CD8-positive, alpha-beta T cell (primary cell): ENCODE measurements at regions of chr19 and their contacts with region 1.

Region 1: DNA sequence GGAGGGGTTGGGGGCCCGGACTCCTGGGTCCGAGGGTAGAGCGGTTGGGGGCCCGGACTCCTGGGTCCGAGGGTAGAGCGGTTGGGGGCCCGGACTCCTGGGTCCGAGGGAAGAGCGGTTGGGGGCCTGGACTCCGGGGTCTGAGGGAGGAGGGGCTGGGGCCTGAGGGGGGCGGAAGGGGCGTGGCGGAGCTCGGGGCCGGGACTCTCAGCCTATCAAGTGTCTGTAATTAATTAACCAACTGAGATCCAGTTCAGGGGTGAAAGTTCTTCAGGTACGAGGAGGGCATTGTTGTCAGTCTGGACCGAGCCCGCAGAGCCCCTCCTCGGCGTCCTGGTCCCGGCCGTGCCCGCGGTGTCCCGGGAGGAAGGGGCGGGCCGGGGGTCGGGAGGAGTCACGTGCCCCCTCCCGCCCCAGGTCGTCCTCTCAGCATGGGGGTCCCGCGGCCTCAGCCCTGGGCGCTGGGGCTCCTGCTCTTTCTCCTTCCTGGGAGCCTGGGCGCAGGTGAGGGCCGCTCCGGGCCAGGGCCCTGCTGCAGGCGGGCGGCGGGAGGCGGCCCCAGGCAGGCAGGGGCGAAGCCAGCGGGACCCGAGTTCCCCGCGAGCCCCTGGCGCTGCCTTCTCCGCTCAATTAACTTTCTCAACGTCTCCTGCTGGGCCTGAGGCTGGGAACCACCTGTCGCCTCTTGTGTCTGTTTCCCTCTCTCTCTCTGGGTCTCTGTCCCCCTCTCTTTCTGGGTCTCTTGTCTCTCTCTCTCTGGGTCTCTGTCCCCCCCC is 697 bp downstream of the FCGRT start:
- DNase-seq: peak in 2 of 9 experiments; percentile 48 to 56
- ATAC-seq: peak; percentile 72
- H3K4me3 ChIP-seq: peak overlapping the region; percentile 61 to 66
- H3K4me3 Mint-ChIP-seq: peak overlapping the region; percentile 84
- H3K27ac ChIP-seq: peak overlapping the region; percentile 32 to 33
- H3K27ac Mint-ChIP-seq: peak overlapping the region; percentile 71
- H3K4me1 ChIP-seq: peaks cover 24% of the 10 kb centered on the region
- H3K4me1 Mint-ChIP-seq: peaks cover 32% of the 10 kb centered on the region
- H3K27me3 ChIP-seq: no peaks in the 10 kb centered on the region
- H3K27me3 Mint-ChIP-seq: no peaks in the 10 kb centered on the region
- CTCF ChIP-seq: no peak

Region 2: DNA sequence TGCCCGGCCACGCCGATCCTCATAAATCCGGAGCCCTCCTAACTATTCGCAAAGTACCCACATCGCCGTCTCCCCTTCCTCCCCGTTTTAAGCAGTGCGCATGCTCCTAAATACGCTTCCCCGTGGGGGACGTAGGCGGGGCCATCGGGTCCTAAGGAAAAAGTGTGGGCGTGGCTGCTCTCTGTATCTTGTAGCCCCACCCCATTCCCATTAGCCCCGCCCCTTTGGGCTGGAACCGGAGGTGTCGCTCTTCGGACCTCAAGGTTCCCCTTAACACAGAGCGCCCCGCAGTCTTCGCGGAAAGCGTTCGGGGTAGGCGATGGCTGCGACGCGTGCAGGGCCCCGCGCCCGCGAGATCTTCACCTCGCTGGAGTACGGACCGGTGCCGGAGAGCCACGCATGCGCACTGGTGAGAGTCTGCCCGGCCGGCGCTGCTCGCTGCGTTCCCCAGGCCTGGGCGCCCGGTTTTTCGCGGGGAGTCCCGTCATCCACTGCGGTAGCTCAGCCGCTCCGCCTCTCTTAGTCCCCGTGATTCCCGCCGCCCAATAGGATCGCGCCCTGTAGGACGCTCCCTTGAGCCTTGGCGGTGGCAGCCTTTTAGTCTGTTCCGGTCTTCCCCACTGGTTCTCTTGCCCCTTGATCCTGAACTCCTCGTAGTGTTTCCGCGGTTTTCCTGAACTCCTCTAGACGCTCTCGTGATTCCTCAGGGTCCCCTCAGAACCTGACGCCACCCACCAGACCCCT is 60.0 kb before region 1 on chr19 and contains the start of gene ALDH16A1:
- CTCF ChIA-PET with region 1: no interaction called
- POLR2A ChIA-PET with region 1: no interaction called
- intact Hi-C with region 1: no loop called
- DNase-seq: peak; percentile 94 to 99 (median 97)
- ATAC-seq: peak; percentile 86
- H3K4me3 ChIP-seq: peak within 1 kb of the TSS; percentile 66 to 87
- H3K4me3 Mint-ChIP-seq: peak within 1 kb of the TSS; percentile 99
- H3K27ac ChIP-seq: peak within 1 kb of the TSS; percentile 89 to 96
- H3K27ac Mint-ChIP-seq: peak within 1 kb of the TSS; percentile 99
- H3K4me1 ChIP-seq: peaks cover 31% of the 10 kb centered on the region
- H3K4me1 Mint-ChIP-seq: peaks cover 51% of the 10 kb centered on the region
- H3K27me3 ChIP-seq: no peaks in the 10 kb centered on the region
- H3K27me3 Mint-ChIP-seq: no peaks in the 10 kb centered on the region
- CTCF ChIP-seq: no peak
- total RNA-seq, gene ALDH16A1: 26.1 to 30.7 TPM

Region 3: GRCh38 chr19:49533551-49534488 is 20.7 kb after region 1 on chr19:
- CTCF ChIA-PET with region 1: interaction called, 17 read pairs
- POLR2A ChIA-PET with region 1: interaction called, 3 read pairs
- intact Hi-C with region 1: loop called in 1 of 2 experiments (anchors 1 kb)
- DNase-seq: peak; percentile 72 to 92 (median 86)
- ATAC-seq: peak; percentile 91
- H3K4me3 ChIP-seq: peak overlapping the region; percentile 71 to 78
- H3K4me3 Mint-ChIP-seq: peak overlapping the region; percentile 84
- H3K27ac ChIP-seq: peak overlapping the region in 1 of 2 experiments; percentile 36
- H3K27ac Mint-ChIP-seq: peak overlapping the region; percentile 55
- H3K4me1 ChIP-seq: peaks cover 21% of the 10 kb centered on the region
- H3K4me1 Mint-ChIP-seq: peaks cover 23% of the 10 kb centered on the region
- H3K27me3 ChIP-seq: peaks cover 0 to 3% of the 10 kb centered on the region in 2 experiments
- H3K27me3 Mint-ChIP-seq: no peaks in the 10 kb centered on the region
- CTCF ChIP-seq: no peak